Left cardiac atrium (tissue), 4 donors: ENCODE measurements at regions of chr7 and their contacts with region 1.

Region 1: GRCh38 chr7:44587843-44588711 is 6.0 kb upstream of the TMED4 start:
- DNase-seq: peak; percentile 47
- ATAC-seq: peak; percentile 61 to 72

Region 2: GRCh38 chr7:44921607-44922359 is 333.7 kb after region 1 on chr7:
- intact Hi-C with region 1: loop called (anchors 5 kb)
- DNase-seq: peak; percentile 93
- ATAC-seq: peak; percentile 98